ENCODE measurements at regions of chr6 and their contacts with region 1.

Region 1: GRCh38 chr6:105363100-105363754 is 39.7 kb downstream of the PREP start:
- DNase-seq: no peak
- H3K4me3 ChIP-seq: no peak overlapping the region
- H3K27ac ChIP-seq: no peak overlapping the region
- H3K27me3 ChIP-seq: no peaks in the 10 kb centered on the region
- CTCF ChIP-seq: peak; percentile 58

Region 2: DNA sequence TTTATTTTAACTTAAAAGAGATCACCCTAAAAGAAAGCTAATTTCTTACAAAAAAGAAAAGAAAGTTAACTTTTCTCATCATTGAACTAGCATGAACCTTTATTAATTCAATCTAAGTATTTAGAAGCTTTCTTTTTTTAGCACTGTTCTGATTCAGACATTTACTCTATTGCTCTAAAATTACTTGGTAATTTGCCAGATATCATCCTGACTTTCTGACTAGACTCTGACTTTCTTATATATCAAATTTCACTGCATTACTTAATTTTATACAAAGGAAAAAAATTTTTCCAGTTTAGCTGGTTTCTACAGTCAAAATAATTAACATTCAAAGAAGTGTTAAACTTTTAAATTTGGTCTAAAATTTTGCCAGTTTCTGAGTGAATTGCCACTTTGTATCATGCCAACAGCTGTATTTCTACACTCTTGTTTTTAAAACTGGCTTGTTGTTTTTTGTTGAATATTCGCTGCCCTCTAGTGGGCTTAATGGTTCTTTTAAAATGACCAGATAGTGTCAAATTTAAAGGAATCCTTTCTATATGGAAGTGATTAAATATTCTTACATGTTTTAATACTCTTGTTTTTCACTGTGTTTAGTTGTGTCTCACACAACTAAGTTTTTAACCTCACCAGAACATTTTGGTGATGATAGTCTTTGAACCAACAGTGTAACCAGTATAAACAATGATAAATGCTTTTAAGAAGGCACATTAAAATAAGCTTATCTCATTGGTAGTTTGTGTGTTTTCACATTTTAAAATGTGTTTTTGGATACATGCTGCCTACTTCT is 285.4 kb before region 1 on chr6:
- CTCF ChIA-PET with region 1: interaction called, 10 read pairs
- POLR2A ChIA-PET with region 1: no interaction called
- DNase-seq: peak; percentile 6
- H3K4me3 ChIP-seq: no peak overlapping the region
- H3K27ac ChIP-seq: no peak overlapping the region
- H3K27me3 ChIP-seq: no peaks in the 10 kb centered on the region
- CTCF ChIP-seq: peak; percentile 61

Region 3: GRCh38 chr6:105116150-105116549 is 247.1 kb before region 1 on chr6:
- CTCF ChIA-PET with region 1: interaction called, 11 read pairs
- POLR2A ChIA-PET with region 1: no interaction called
- DNase-seq: no peak
- H3K4me3 ChIP-seq: no peak overlapping the region
- H3K27ac ChIP-seq: no peak overlapping the region
- H3K27me3 ChIP-seq: no peaks in the 10 kb centered on the region
- CTCF ChIP-seq: no peak

Region 4: GRCh38 chr6:105136431-105137350 is 226.5 kb before region 1 on chr6:
- CTCF ChIA-PET with region 1: interaction called, 17 read pairs
- POLR2A ChIA-PET with region 1: interaction called, 4 read pairs
- DNase-seq: peak; percentile 26
- H3K4me3 ChIP-seq: peak overlapping the region; percentile 74
- H3K27ac ChIP-seq: peak overlapping the region; percentile 34
- H3K27me3 ChIP-seq: no peaks in the 10 kb centered on the region
- CTCF ChIP-seq: peak; percentile 26

Region 5: DNA sequence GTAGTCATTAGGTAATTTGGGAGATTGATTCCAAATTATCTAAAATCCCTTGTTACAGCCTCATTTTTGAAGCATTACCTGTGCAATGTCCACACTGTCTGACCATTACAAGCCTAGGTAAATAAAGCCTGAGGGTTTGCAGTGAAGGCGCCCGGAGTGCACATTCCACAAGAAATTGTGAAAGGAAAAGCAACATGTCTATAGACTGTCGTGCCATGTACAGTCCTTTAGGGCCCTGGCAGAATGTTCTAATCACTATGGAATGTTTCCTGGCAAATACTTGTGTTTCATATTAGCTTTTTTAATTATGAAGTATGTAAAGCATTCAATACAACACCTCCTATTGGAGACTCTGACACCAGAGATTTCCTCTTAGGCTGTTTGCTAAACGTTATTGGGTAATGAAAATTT is 10.8 kb after region 1 on chr6:
- CTCF ChIA-PET with region 1: interaction called, 28 read pairs
- POLR2A ChIA-PET with region 1: no interaction called
- DNase-seq: no peak
- H3K4me3 ChIP-seq: no peak overlapping the region
- H3K27ac ChIP-seq: no peak overlapping the region
- H3K27me3 ChIP-seq: no peaks in the 10 kb centered on the region
- CTCF ChIP-seq: no peak

Region 6: GRCh38 chr6:105545947-105546731 is 182.9 kb after region 1 on chr6:
- CTCF ChIA-PET with region 1: no interaction called
- POLR2A ChIA-PET with region 1: no interaction called
- DNase-seq: no peak
- H3K4me3 ChIP-seq: no peak overlapping the region
- H3K27ac ChIP-seq: no peak overlapping the region
- H3K27me3 ChIP-seq: no peaks in the 10 kb centered on the region
- CTCF ChIP-seq: no peak